B cell (primary cell): ENCODE measurements at regions of chr13 and their contacts with region 1.

Region 1: GRCh38 chr13:50446611-50447010 is 396.9 kb downstream of the DLEU7 start:
- DNase-seq: no peak
- ATAC-seq: no peak
- H3K4me3 ChIP-seq: no peak overlapping the region
- H3K4me3 Mint-ChIP-seq: no peak overlapping the region
- H3K27ac ChIP-seq: no peak overlapping the region
- H3K27ac Mint-ChIP-seq: no peak overlapping the region
- H3K4me1 ChIP-seq: peaks cover 6 to 7% of the 10 kb centered on the region in 2 donors
- H3K4me1 Mint-ChIP-seq: peaks cover 12% of the 10 kb centered on the region
- H3K27me3 ChIP-seq: no peaks in the 10 kb centered on the region
- H3K27me3 Mint-ChIP-seq: no peaks in the 10 kb centered on the region
- CTCF ChIP-seq: no peak

Region 2: DNA sequence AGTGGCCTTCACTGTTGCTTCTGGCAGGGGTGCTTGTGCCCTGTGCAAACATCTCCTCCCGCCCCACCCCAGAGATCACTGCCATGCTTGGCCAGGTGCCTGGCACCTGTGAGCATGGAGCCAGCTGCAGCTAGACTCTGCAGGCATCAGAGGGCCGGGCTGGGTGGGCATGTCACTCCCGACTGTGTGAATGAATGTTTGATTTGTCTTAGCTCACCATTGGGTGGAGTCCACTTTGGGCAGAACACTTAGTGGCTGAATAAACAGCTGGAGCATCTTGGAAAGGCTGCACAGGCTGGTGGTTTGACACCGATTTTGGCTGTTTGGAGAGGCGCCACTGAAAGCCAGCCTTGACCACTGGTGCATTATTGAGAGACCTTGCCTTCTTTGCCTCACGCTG is 129.5 kb after region 1 on chr13:
- CTCF ChIA-PET with region 1: no interaction called
- POLR2A ChIA-PET with region 1: interaction called, 17 read pairs
- intact Hi-C with region 1: no loop called
- DNase-seq: no peak
- ATAC-seq: no peak
- H3K4me3 ChIP-seq: no peak overlapping the region
- H3K4me3 Mint-ChIP-seq: no peak overlapping the region
- H3K27ac ChIP-seq: no peak overlapping the region
- H3K27ac Mint-ChIP-seq: no peak overlapping the region
- H3K4me1 ChIP-seq: peaks cover 0 to 10% of the 10 kb centered on the region in 2 donors
- H3K4me1 Mint-ChIP-seq: peaks cover 12% of the 10 kb centered on the region
- H3K27me3 ChIP-seq: no peaks in the 10 kb centered on the region
- H3K27me3 Mint-ChIP-seq: no peaks in the 10 kb centered on the region
- CTCF ChIP-seq: no peak